Activated CD8-positive, alpha-beta T cell treated with anti-CD3 and anti-CD28 coated beads, Interleukin-2, amount 10 ng/mL, durations not matched to agents 7 days and 5 days (primary cell): ENCODE measurements at regions of chr17 and their contacts with region 1.

Region 1: GRCh38 chr17:39174907-39175694 is 9.1 kb upstream of the ARL5C start:
- DNase-seq: peak; percentile 87
- ATAC-seq: peak; percentile 87
- H3K4me3 Mint-ChIP-seq: no peak overlapping the region
- H3K27ac Mint-ChIP-seq: no peak overlapping the region
- H3K4me1 Mint-ChIP-seq: peaks cover 34% of the 10 kb centered on the region
- H3K27me3 Mint-ChIP-seq: no peaks in the 10 kb centered on the region

Region 2: GRCh38 chr17:39096508-39097149 is 78.5 kb before region 1 on chr17:
- CTCF ChIA-PET with region 1: interaction called, 11 read pairs
- POLR2A ChIA-PET with region 1: no interaction called
- DNase-seq: peak; percentile 81
- ATAC-seq: peak; percentile 55
- H3K4me3 Mint-ChIP-seq: peak overlapping the region; percentile 67
- H3K27ac Mint-ChIP-seq: peak overlapping the region; percentile 92
- H3K4me1 Mint-ChIP-seq: peaks cover 65% of the 10 kb centered on the region
- H3K27me3 Mint-ChIP-seq: peaks cover 3% of the 10 kb centered on the region

Region 3: DNA sequence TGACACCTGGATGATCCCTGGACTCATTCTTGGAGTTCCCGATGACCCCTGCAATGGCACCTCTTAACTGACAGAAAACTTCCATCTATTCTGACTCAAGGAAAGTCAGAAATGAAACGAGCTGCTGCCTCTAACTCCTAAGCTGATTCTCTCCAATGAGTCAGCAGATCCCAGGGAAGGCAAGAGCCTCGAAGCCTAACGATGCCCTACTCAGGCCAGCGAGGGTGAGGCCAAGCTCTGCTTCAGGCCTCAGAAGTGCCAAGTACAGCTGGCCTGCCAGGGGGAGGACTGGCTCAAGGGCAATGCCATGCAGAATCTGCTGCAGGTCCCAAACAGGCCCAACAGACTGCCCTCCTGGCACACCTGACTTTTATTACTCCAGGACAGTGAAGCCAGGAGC is 60.0 kb before region 1 on chr17:
- CTCF ChIA-PET with region 1: no interaction called
- POLR2A ChIA-PET with region 1: no interaction called
- DNase-seq: no peak
- ATAC-seq: no peak
- H3K4me3 Mint-ChIP-seq: no peak overlapping the region
- H3K27ac Mint-ChIP-seq: no peak overlapping the region
- H3K4me1 Mint-ChIP-seq: peaks cover 2% of the 10 kb centered on the region
- H3K27me3 Mint-ChIP-seq: no peaks in the 10 kb centered on the region

Region 4: DNA sequence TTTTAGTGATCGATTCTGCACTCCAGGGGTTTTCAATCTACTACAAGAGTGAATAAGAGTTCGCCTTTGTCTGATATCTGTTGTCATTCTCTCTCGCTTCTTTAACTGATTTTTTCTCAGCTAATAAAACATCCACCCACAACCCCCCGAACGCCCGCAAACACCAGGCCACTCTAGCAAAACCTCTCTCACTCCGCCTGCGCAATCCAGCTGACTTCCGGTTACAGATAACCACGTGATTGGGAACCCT is 24.6 kb after region 1 on chr17:
- CTCF ChIA-PET with region 1: interaction called, 50 read pairs
- POLR2A ChIA-PET with region 1: interaction called, 5 read pairs
- DNase-seq: peak; percentile 94
- ATAC-seq: peak; percentile 57
- H3K4me3 Mint-ChIP-seq: peak overlapping the region; percentile 99
- H3K27ac Mint-ChIP-seq: peak overlapping the region; percentile 97
- H3K4me1 Mint-ChIP-seq: peaks cover 63% of the 10 kb centered on the region
- H3K27me3 Mint-ChIP-seq: no peaks in the 10 kb centered on the region